ENCODE measurements at regions of chr6 and their contacts with region 1.

Region 1: DNA sequence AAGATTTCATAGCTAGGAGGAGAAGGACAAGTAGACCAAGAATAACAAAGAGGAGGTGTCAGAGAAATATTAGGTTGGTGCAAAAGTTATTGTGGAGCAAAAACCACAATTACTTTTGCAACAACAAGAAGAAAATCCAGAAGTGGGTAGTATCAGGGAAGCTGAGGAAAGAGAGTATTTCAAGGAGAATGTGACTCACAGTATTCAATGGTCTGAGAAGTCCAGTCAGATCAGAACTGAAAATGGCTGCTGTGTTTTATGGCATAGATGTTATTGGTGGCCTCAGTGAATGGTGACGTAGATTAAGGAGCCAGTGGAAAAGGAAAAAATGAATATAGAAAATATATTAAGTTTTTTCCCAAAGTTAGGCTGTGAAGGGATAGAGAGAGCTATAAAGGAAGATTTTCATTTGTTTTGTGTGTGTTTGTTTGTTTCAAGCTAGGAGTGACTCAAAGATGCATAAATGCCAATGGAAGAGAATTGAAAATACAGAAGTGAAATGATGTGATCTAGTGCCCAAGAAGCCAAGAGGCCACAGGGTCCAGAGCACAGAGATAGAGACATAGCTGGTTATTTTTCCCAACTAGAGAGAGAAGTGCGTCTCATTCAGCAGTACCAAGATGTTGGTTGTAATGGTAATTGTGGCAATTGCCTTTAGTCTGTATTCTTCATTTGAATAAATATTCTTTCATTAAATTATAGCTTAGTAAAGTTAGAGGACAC is 112.8 kb downstream of the ADTRP start:
- DNase-seq: no peak
- ATAC-seq: no peak
- H3K4me3 ChIP-seq: no peak overlapping the region
- H3K27ac ChIP-seq: no peak overlapping the region
- H3K4me1 ChIP-seq: no peaks in the 10 kb centered on the region
- H3K27me3 ChIP-seq: no peaks in the 10 kb centered on the region
- CTCF ChIP-seq: no peak
- POLR2A ChIP-seq: no peak

Region 2: DNA sequence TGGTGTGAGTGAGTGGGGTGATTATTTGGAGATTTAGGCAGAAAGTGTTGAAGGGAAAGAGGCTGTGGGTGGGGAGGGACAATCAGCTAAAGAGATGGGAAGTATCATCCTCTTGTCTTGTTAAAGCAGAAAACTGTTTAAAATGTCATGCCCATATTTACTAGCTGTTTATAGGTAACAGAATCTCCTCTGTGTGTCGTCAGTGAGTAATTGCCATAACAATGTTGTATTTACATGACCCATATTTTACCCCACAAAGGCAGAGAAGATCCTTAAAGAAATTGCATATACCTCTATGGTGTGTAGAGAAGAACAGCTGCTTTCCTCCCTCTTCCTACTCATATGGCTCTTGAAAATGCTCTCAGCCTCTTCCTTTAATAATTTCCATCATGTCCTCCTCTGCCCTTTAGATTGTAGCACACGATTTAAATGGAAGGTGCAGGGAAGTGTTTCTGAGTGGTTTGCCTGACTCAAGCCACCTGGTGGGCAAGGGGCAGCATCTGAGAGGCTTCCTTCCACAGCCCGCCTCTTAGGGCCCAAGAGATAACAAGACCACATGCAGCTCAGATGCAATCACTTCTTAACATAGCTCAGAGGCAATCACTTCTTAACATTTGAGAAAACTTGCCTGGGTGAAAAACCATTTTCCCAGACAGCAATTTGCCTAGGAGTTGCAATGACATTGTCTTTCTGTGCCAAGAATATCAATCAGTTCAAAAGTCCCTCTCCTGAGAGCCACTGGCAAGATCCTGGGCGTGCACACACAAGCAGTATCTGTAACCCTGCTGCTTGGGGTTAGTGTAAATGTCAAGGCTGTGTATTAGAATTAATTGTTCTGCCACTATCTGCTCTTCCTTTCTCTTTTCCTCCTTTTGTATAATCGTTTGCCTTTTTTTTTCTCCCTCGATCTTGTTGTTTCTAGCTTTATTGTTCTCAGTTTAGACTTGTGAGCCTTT is 580.3 kb after region 1 on chr6:
- in situ Hi-C with region 1: loop called in 1 of 4 experiments (anchors 10 kb)
- intact Hi-C with region 1: no loop called
- DNase-seq: no peak
- ATAC-seq: no peak
- H3K4me3 ChIP-seq: no peak overlapping the region
- H3K27ac ChIP-seq: no peak overlapping the region
- H3K4me1 ChIP-seq: no peaks in the 10 kb centered on the region
- H3K27me3 ChIP-seq: no peaks in the 10 kb centered on the region
- CTCF ChIP-seq: no peak
- POLR2A ChIP-seq: no peak

Region 3: DNA sequence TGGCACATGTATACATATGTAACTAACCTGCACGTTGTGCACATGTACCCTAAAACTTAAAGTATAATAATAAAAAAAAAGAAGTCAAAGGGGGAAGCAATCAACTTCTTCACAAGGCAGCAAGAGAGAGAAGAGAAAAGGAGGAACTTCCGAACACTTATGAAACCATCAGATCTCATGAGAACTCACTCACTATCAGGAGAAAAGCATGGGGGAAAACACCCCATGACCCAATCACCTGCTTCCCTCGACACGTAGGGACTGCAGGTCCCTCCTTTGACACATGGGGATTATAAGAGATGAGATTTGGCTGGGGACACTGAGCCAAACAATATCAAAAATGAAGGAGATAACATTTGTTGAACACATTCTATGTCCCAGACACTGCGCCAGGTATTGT is 956.0 kb after region 1 on chr6:
- in situ Hi-C with region 1: loop called in 3 of 4 experiments (anchors 10 to 25 kb)
- intact Hi-C with region 1: no loop called
- DNase-seq: no peak
- ATAC-seq: no peak
- H3K4me3 ChIP-seq: no peak overlapping the region
- H3K27ac ChIP-seq: no peak overlapping the region
- H3K4me1 ChIP-seq: no peaks in the 10 kb centered on the region
- H3K27me3 ChIP-seq: no peaks in the 10 kb centered on the region
- CTCF ChIP-seq: no peak
- POLR2A ChIP-seq: no peak